Activated CD4-positive, alpha-beta T cell treated with anti-CD3 and anti-CD28 coated beads, Interleukin-2, amount 10 ng/mL, durations not matched to agents 24 days and 14 days (primary cell): ENCODE measurements at regions of chr21 and their contacts with region 1.

Region 1: GRCh38 chr21:36319765-36320420 is at the start of gene MORC3:
- DNase-seq: peak; percentile 99
- H3K4me3 Mint-ChIP-seq: peak within 1 kb of the TSS; percentile 87
- H3K27ac Mint-ChIP-seq: peak within 1 kb of the TSS; percentile 98
- H3K4me1 Mint-ChIP-seq: peaks cover 24% of the 10 kb centered on the region
- H3K27me3 Mint-ChIP-seq: no peaks in the 10 kb centered on the region
- total RNA-seq, gene MORC3: 24.8 and 24.9 TPM in 2 replicates

Region 2: DNA sequence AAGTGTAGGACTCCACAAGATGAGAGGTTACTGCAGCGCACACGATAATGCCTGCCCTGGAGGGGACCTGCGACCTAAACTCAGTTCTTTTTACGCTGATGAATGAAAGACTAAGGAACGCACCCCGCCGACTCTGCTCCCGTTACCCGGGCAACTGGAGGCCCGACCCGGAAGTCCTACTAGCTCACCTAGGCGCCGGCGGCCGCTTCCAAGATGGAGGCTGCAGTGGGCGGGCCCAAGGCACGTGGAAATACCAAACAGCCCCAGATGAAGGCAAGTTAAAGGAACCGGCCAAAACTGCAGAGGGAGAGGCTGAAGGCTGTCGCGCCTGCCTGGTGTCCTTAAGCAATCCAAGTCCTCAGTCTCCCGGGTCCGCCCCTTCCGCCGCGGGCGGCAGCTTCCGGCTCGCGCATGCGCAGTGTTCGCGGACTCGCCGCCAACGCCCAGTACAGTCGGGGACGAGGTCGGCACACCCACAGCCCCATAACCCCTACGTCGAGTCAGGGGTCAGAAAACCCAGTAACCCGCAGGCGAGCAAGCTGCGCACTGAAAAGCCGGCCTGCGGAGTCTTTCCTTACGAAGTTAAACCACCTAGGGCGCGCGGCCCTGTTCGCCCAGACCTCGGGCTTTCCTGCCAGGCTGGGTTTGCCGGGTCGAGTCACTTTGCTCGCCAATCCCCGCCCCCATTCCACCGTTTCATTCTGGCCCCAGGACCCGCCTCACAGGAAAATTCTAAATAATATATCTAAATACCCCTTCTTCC is 259.6 kb before region 1 on chr21 and contains the start of gene SETD4:
- intact Hi-C with region 1: loop called (anchors 1 kb)
- DNase-seq: peak; percentile 98
- H3K4me3 Mint-ChIP-seq: peak within 1 kb of the TSS; percentile 94
- H3K27ac Mint-ChIP-seq: peak within 1 kb of the TSS; percentile 99
- H3K4me1 Mint-ChIP-seq: peaks cover 24% of the 10 kb centered on the region
- H3K27me3 Mint-ChIP-seq: peaks cover 1% of the 10 kb centered on the region
- total RNA-seq, gene SETD4: 23.2 and 23.8 TPM in 2 replicates

Region 3: GRCh38 chr21:36156339-36156814 is 163.5 kb before region 1 on chr21:
- intact Hi-C with region 1: loop called (anchors 1 kb)
- DNase-seq: peak; percentile 100
- H3K4me3 Mint-ChIP-seq: peak overlapping the region; percentile 85
- H3K27ac Mint-ChIP-seq: no peak overlapping the region
- H3K4me1 Mint-ChIP-seq: peaks cover 23% of the 10 kb centered on the region
- H3K27me3 Mint-ChIP-seq: peaks cover 8% of the 10 kb centered on the region

Region 4: GRCh38 chr21:36385233-36386030 is 65.5 kb after region 1 on chr21 and contains the start of gene CHAF1B:
- intact Hi-C with region 1: loop called (anchors 1 kb)
- DNase-seq: peak; percentile 96
- H3K4me3 Mint-ChIP-seq: peak within 1 kb of the TSS; percentile 84
- H3K27ac Mint-ChIP-seq: peak within 1 kb of the TSS; percentile 71
- H3K4me1 Mint-ChIP-seq: peaks cover 19% of the 10 kb centered on the region
- H3K27me3 Mint-ChIP-seq: no peaks in the 10 kb centered on the region
- total RNA-seq, gene CHAF1B: 33.4 and 36.5 TPM in 2 replicates

Region 5: DNA sequence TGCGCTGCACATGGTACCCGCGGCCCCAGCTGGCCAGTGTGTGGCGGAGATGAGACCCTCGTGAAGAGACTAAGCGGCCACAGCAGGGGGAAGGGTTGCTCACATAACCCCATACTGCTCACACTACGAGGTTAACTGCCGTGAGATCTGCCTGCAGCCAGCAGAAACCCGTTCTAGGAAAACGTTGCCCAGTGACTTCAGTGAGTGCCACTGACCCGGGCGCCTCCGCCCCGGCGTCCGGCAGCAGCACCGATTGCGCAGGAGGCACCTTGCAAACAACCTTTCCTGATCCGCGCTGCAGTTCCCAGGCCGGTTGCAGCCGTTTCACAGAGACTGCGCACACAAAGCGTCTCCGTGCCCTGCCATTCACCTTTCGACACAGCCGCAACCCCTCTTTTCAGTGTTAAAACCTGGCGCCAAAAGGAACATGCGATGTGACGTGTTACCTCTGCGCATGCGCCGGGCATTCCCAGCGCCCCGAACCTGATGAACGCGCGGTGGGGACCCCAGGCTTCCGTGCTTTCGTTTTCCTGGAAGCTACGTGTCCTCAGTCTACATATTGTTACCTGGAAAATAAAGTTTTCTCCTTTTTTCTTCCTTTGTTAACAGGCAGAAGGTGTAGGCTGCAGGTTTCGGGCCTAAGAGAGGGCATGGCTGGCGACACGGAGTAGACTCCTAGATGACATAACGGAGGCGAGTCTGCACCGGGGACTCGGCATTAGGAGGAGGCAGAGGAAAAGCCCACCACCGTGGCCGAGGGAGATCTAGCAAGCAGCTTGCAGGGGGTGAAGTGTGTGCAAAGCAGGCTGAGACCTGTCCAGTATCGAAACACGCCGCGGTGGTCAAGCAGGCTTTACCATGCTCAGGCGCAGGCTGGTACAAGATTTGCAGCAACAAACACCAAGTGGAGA is 938.3 kb after region 1 on chr21:
- intact Hi-C with region 1: loop called (anchors 10 kb)
- DNase-seq: peak; percentile 96
- H3K4me3 Mint-ChIP-seq: peak overlapping the region; percentile 97
- H3K27ac Mint-ChIP-seq: peak overlapping the region; percentile 99
- H3K4me1 Mint-ChIP-seq: peaks cover 39% of the 10 kb centered on the region
- H3K27me3 Mint-ChIP-seq: peaks cover 2% of the 10 kb centered on the region